Naive thymus-derived CD8-positive, alpha-beta T cell (primary cell): ENCODE measurements at regions of chr18 and their contacts with region 1.

Region 1: DNA sequence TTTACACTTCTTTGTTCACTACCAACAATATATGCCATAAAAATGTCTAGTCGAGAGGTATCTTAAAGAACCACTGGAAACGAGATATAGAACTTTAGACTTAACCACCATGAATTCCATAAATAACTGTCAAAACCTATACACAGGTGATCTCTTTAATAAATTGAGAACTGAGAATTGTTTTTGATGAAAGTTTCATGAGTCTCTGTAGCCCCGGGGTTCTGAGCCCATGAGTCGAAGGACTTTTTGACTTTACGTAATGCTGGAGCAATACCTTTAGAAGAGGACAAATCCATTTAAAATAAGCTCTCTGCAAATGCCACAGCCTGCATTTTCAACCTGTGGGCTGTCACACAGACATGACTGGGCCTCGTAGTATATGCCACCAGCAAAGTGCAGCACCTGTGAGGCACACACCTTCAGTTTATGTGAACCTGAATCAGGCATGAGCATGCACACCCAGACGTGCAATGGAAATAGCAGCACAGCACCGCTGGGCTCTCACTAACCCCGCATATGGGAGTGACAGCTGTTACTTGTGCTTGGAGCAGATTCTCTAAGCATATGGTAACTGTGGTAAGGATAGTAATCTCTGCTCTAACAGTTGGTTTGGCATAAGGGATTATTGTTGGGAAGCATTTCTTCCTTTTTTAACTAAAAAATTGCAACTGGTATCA is 383.2 kb downstream of the SOCS6 start:
- DNase-seq: peak in 5 of 10 donors; percentile 11 to 65 (median 19)
- ATAC-seq: peak; percentile 46 to 55
- H3K4me3 Mint-ChIP-seq: peak overlapping the region in 8 of 10 donors; percentile 5 to 59 (median 40)
- H3K27ac Mint-ChIP-seq: peak overlapping the region; percentile 76 to 98 (median 94)
- H3K4me1 Mint-ChIP-seq: peaks cover 11 to 67% (median 59%) of the 10 kb centered on the region in 4 donors
- H3K27me3 Mint-ChIP-seq: no peaks in the 10 kb centered on the region

Region 2: DNA sequence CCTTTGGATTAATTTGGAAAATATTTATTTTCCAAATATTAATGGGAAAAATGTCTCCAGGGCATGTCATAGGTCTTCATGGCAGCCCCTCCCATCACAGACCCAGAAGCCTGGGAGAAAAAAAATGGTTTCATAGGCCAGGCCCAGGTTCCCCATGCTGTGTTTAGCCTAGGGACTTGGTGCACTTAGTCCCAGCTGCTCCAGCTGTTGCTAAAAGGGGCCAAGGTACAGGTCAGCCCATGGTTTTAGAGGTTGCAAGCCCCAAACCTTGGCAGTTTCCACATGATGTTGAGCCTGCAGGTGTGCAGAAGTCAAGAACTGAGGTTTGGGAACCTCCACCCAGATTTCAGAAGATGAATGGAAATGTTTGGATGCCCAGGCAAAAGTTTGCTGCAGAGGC is 73.6 kb before region 1 on chr18:
- POLR2A ChIA-PET with region 1: interaction called, 28 read pairs
- DNase-seq: no peak
- ATAC-seq: peak in 1 of 2 donors; percentile 7
- H3K4me3 Mint-ChIP-seq: peak overlapping the region in 1 of 10 donors; percentile 67
- H3K27ac Mint-ChIP-seq: peak overlapping the region in 6 of 10 donors; percentile 78 to 92 (median 84)
- H3K4me1 Mint-ChIP-seq: peaks cover 6 to 29% (median 12%) of the 10 kb centered on the region in 4 donors
- H3K27me3 Mint-ChIP-seq: no peaks in the 10 kb centered on the region

Region 3: DNA sequence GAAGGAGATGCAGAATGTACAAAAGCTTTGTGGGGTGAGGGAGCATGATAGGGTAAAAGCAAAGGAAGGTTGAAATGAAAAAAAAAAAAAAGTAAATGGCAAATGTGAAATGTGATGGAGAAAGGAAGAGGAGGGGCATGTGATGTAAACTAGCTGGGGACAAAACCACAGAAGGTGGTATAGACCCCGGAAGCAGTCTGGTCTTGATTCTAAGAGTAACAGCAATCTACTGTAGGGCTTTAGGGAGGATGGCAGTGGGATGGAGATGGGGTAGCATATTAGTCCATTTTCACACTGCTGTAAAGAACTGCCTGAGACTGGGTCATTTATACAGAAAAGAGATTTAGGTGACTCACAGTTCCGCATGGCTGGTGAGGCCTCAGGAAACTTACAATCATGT is 21.1 kb before region 1 on chr18:
- POLR2A ChIA-PET with region 1: interaction called, 16 read pairs
- DNase-seq: peak in 1 of 10 donors; percentile 20
- ATAC-seq: peak; percentile 59 to 61
- H3K4me3 Mint-ChIP-seq: peak overlapping the region; percentile 17 to 83 (median 69)
- H3K27ac Mint-ChIP-seq: peak overlapping the region; percentile 63 to 93 (median 85)
- H3K4me1 Mint-ChIP-seq: peaks cover 12 to 38% (median 22%) of the 10 kb centered on the region in 4 donors
- H3K27me3 Mint-ChIP-seq: no peaks in the 10 kb centered on the region

Region 4: DNA sequence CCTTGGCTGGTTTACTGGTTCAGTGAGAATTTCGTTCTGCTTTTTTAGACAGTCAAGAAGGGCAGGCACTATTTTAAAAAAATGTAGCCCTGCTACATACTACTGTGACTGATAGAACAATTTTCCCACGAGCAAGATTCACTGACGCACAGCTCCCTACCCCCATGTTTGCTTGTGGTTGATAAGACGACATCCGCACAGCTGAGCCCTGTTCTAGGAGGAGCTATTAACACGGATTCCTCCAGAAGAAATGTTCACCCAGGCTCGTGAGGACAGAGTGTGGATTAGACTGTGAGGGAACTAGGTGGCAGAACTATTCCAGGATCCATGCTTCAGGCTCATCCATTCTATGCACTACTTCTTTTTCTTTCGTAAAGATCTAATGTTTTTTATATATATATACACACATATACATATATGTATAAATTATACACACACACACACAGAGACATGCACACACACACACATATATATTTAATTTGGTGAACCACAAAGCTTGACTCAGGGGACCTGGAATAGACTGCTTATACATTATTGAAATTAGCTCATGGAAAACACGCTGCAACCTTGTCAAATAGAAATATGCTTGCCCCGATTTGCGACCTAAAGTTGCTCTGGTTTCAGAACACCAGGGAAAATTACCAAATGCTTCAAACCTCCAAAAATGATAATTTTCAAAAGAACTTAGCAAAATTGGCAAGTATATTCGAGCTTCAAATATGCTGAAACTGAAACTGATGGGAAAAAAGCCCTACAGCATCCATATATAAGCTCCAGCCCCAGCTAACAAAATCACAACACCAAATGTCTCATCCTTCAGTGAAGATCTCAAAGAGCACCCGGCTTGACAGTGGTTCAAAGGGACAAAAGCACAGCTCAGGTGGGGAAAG is 12.7 kb before region 1 on chr18:
- POLR2A ChIA-PET with region 1: interaction called, 46 read pairs
- DNase-seq: peak; percentile 29 to 90 (median 78)
- ATAC-seq: peak; percentile 88 to 96
- H3K4me3 Mint-ChIP-seq: peak overlapping the region; percentile 48 to 76 (median 68)
- H3K27ac Mint-ChIP-seq: peak overlapping the region; percentile 94 to 100 (median 96)
- H3K4me1 Mint-ChIP-seq: peaks cover 25 to 65% (median 59%) of the 10 kb centered on the region in 4 donors
- H3K27me3 Mint-ChIP-seq: no peaks in the 10 kb centered on the region

Region 5: GRCh38 chr18:70683263-70683662 is 11.2 kb after region 1 on chr18:
- POLR2A ChIA-PET with region 1: interaction called, 23 read pairs
- DNase-seq: peak in 3 of 10 donors; percentile 48 to 61 (median 59)
- ATAC-seq: peak; percentile 84 to 94
- H3K4me3 Mint-ChIP-seq: peak overlapping the region in 7 of 10 donors; percentile 8 to 53 (median 19)
- H3K27ac Mint-ChIP-seq: peak overlapping the region; percentile 78 to 96 (median 90)
- H3K4me1 Mint-ChIP-seq: peaks cover 12 to 31% (median 24%) of the 10 kb centered on the region in 4 donors
- H3K27me3 Mint-ChIP-seq: no peaks in the 10 kb centered on the region

Region 6: GRCh38 chr18:70936160-70936559 is 264.1 kb after region 1 on chr18:
- POLR2A ChIA-PET with region 1: no interaction called
- DNase-seq: no peak
- ATAC-seq: no peak
- H3K4me3 Mint-ChIP-seq: no peak overlapping the region
- H3K27ac Mint-ChIP-seq: peak overlapping the region in 1 of 10 donors; percentile 22
- H3K4me1 Mint-ChIP-seq: peaks cover 3 to 8% (median 7%) of the 10 kb centered on the region in 4 donors
- H3K27me3 Mint-ChIP-seq: no peaks in the 10 kb centered on the region

Region 7: DNA sequence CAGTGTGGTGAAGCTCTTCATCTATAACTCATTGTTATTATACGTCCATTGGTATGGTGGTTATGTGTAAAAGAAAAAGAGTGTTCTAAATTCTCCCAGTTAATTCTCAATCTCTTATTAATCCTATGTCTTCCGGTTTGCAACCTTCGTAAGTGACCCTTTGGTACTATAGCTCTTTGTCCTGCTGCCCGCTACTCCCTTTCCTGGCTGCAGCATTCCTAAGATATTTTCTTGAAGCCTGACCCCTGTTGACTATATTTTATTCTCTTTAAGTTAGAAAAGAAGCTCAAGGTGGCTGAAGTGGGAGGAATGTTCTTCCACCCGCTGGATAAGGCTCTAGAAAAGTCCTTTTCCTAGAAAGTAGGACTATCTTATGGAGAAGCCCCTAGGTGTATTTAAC is 301.6 kb after region 1 on chr18:
- POLR2A ChIA-PET with region 1: no interaction called
- DNase-seq: no peak
- ATAC-seq: no peak
- H3K4me3 Mint-ChIP-seq: no peak overlapping the region
- H3K27ac Mint-ChIP-seq: no peak overlapping the region
- H3K4me1 Mint-ChIP-seq: peaks cover 0 to 2% (median 0%) of the 10 kb centered on the region in 4 donors
- H3K27me3 Mint-ChIP-seq: peaks cover 0 to 8% (median 0%) of the 10 kb centered on the region in 5 donors